ENCODE measurements at regions of chr5 and their contacts with region 1.

Region 1: GRCh38 chr5:159581502-159582249 is 251.4 kb upstream of the IL12B start:
- DNase-seq: peak; percentile 92 to 99
- H3K4me3 ChIP-seq: no peak overlapping the region
- H3K27ac ChIP-seq: peak overlapping the region; percentile 98
- H3K4me1 ChIP-seq: peaks cover 50% of the 10 kb centered on the region
- H3K27me3 ChIP-seq: no peaks in the 10 kb centered on the region
- CTCF ChIP-seq: peak; percentile 36

Region 2: GRCh38 chr5:159156426-159157238 is 425.0 kb before region 1 on chr5:
- CTCF ChIA-PET with region 1: no interaction called
- POLR2A ChIA-PET with region 1: no interaction called
- intact Hi-C with region 1: loop called (anchors 10 kb)
- DNase-seq: peak; percentile 38 to 42
- H3K4me3 ChIP-seq: no peak overlapping the region
- H3K27ac ChIP-seq: peak overlapping the region; percentile 25; the same call in 1 of the 2 replicates
- H3K4me1 ChIP-seq: no peaks in the 10 kb centered on the region
- H3K27me3 ChIP-seq: no peaks in the 10 kb centered on the region
- CTCF ChIP-seq: peak; percentile 92

Region 3: GRCh38 chr5:159341914-159342313 is 239.8 kb before region 1 on chr5:
- CTCF ChIA-PET with region 1: no interaction called
- POLR2A ChIA-PET with region 1: no interaction called
- intact Hi-C with region 1: loop called (anchors 5 kb)
- DNase-seq: peak; percentile 83 to 88
- H3K4me3 ChIP-seq: no peak overlapping the region
- H3K27ac ChIP-seq: no peak overlapping the region
- H3K4me1 ChIP-seq: peaks cover 37% of the 10 kb centered on the region
- H3K27me3 ChIP-seq: peaks cover 25% of the 10 kb centered on the region
- CTCF ChIP-seq: no peak

Region 4: GRCh38 chr5:159504857-159505304 is 76.8 kb before region 1 on chr5:
- CTCF ChIA-PET with region 1: no interaction called
- POLR2A ChIA-PET with region 1: no interaction called
- intact Hi-C with region 1: loop called (anchors 1 kb)
- DNase-seq: peak; percentile 89 to 93
- H3K4me3 ChIP-seq: peak overlapping the region; percentile 18; the same call in 1 of the 2 replicates
- H3K27ac ChIP-seq: peak overlapping the region; percentile 82
- H3K4me1 ChIP-seq: peaks cover 38% of the 10 kb centered on the region
- H3K27me3 ChIP-seq: no peaks in the 10 kb centered on the region
- CTCF ChIP-seq: no peak

Region 5: DNA sequence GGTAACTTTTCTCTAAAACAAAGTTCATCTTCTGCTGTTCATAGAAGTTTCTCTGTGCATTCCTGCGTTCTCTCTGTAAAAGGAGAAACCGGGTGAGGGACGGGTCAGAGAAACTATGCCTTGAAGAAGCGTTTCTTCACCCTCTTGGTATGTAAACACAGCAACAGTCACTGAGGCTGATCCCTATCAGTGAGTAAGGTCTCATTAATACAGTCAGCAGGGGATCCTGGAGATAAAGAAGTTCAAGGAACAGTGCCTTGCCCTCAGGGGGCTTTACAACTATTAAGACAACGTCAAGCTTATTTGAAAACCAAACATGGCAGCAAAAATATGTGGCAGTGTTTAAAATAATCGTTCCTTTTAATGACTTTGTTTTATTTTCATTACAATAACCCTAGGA is 48.5 kb before region 1 on chr5:
- CTCF ChIA-PET with region 1: no interaction called
- POLR2A ChIA-PET with region 1: no interaction called
- intact Hi-C with region 1: loop called (anchors 1 kb)
- DNase-seq: peak; percentile 45 to 92
- H3K4me3 ChIP-seq: no peak overlapping the region
- H3K27ac ChIP-seq: peak overlapping the region; percentile 67
- H3K4me1 ChIP-seq: peaks cover 10% of the 10 kb centered on the region
- H3K27me3 ChIP-seq: no peaks in the 10 kb centered on the region
- CTCF ChIP-seq: no peak

Region 6: GRCh38 chr5:159773062-159773924 is 191.6 kb after region 1 on chr5:
- CTCF ChIA-PET with region 1: no interaction called
- POLR2A ChIA-PET with region 1: no interaction called
- intact Hi-C with region 1: loop called (anchors 1 kb)
- DNase-seq: peak; percentile 71 to 83
- H3K4me3 ChIP-seq: peak overlapping the region; percentile 61
- H3K27ac ChIP-seq: peak overlapping the region; percentile 66
- H3K4me1 ChIP-seq: peaks cover 33% of the 10 kb centered on the region
- H3K27me3 ChIP-seq: no peaks in the 10 kb centered on the region
- CTCF ChIP-seq: peak; percentile 38; the same call in 1 of the 2 replicates

Region 7: DNA sequence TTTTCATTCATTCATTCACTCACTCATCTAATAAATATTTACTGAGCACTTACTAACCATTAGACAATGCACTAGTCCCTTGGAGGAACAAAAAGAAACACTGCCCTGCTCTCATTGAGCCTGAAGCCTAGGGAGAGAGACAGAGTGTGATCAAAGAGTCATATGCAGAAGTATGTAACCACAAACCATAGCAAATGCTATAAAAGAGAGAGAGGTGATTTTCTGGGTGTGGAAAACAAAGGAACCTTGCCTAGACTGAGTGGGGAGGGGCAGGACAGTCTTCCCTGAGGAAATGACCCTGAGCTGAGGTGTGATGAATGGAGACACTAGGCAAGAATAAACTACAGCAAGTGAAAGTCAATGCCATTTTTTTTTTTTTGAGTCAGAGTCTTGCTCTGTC is 323.8 kb after region 1 on chr5:
- CTCF ChIA-PET with region 1: interaction called, 3 read pairs
- POLR2A ChIA-PET with region 1: no interaction called
- intact Hi-C with region 1: loop called (anchors 1 kb)
- DNase-seq: peak; percentile 89 to 99
- H3K4me3 ChIP-seq: no peak overlapping the region
- H3K27ac ChIP-seq: peak overlapping the region; percentile 97
- H3K4me1 ChIP-seq: peaks cover 87% of the 10 kb centered on the region
- H3K27me3 ChIP-seq: no peaks in the 10 kb centered on the region
- CTCF ChIP-seq: no peak

Measured in PC-9 (cell line).